ENCODE measurements at regions of chr7 and their contacts with region 1.

Region 1: DNA sequence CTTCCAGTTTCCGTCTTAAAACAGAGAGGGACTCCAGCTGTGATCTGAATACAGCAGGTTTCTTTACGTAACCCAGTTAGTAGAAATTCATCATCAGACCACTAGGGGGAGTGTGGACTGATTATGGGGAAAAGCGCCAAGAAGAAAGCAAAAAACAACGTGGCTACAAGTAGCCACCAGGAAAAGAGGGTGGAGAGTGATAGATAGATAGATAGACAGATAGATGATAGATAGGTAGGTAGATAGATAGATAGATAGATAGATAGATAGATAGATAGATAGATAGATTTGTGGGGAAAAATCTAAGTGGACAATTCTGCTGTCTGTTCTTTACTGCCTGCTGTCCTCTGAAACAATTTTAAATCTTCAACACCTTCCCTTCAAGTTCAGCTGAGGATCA is 12.7 kb upstream of the AKR1B10 start:
- DNase-seq: peak; percentile 85
- H3K4me3 ChIP-seq: no peak overlapping the region
- H3K27ac ChIP-seq: no peak overlapping the region
- H3K4me1 ChIP-seq: peaks cover 13% of the 10 kb centered on the region
- H3K27me3 ChIP-seq: no peaks in the 10 kb centered on the region
- CTCF ChIP-seq: peak; percentile 66 to 72
- POLR2A ChIP-seq: no peak

Region 2: DNA sequence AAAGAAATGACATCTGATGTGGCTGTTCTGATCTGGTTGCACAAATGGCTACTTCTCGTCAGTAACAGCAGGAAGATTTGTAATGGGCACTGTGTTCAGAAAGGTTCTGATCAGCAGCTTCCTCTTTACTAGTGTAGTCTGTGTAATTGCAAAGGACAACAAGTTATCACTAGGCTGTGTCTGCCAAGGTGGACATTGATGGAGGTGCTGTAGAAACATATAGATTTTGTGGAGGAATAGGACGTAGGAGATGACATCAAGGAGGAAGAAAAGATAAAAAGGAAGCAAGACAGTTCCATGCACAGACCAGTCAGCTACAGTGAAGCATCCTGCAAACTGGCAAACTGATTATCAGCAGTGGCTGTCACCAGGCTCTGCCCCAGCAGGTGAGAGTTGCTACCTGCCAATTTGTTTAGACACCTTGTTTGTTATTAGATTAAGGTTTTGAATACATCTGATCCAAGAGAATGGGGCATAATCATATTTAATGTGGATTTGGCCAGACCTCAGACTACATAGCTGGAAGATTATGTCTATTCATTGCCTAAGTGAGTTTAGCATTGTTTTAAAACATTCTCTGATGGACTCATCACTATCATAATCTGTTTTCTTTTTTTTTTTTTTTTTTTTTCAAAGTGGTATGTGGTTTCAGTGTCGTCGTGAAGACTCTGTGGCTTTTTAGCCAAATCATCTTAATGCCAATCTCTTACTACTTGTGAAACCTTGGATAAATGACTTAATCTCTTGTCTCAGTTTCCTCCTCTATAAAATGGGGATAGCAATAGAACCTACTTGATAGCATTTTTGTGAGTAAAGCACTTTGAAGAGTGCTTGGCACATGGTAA is 805.4 kb before region 1 on chr7:
- CTCF ChIA-PET with region 1: no interaction called
- POLR2A ChIA-PET with region 1: no interaction called
- dilution Hi-C with region 1: no loop called
- intact Hi-C with region 1: no loop called
- DNase-seq: no peak
- H3K4me3 ChIP-seq: no peak overlapping the region
- H3K27ac ChIP-seq: no peak overlapping the region
- H3K4me1 ChIP-seq: no peaks in the 10 kb centered on the region
- H3K27me3 ChIP-seq: no peaks in the 10 kb centered on the region
- CTCF ChIP-seq: no peak
- POLR2A ChIP-seq: no peak

Region 3: DNA sequence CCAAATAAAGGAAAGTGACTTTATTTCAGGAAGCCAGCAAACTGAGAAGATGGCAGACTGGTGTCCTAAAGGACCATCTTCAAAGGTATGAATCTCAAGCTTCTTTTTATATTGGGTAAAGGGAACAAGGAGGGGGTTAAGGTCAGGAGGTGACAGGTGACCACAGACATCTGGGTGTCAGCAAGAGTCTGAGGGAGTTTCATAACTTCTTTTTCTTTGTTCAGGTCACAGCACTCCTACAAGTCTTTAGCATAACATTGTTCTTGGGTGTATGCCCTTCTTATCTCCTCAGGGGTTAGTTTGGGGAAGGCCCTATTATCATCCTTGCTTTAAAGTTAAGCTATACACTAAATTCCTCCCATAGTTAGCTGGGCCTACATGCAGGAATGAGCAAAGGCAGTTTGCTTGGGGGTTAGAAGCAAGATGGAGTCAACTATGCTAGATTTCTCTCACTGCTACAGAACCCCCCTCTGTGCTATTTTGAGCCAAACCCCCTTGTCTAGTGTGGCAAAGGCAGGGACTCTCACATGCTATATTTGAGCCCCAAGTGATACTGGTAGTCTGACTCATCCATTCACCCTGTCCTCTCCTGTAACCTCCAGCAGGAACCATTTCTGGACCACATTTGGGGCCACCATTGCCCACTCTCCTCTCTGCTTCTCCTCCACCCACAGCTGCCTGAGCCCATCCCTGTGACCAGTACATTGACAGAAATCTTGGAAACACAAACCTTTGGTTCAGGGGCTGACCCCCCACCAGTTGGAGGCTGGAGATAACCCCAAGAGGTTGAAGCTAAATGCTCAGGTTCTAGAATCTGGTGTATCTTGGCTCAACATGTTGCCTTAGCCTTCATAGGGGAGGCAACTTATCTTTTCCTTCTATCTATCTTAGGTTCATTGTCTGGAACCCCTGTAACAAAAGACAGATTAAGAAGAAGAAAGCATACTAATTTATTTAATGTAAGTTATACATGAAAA is 443.0 kb before region 1 on chr7:
- CTCF ChIA-PET with region 1: no interaction called
- POLR2A ChIA-PET with region 1: no interaction called
- dilution Hi-C with region 1: no loop called
- intact Hi-C with region 1: no loop called
- DNase-seq: no peak
- H3K4me3 ChIP-seq: no peak overlapping the region
- H3K27ac ChIP-seq: no peak overlapping the region
- H3K4me1 ChIP-seq: no peaks in the 10 kb centered on the region
- H3K27me3 ChIP-seq: no peaks in the 10 kb centered on the region
- CTCF ChIP-seq: no peak
- POLR2A ChIP-seq: no peak

Region 4: GRCh38 chr7:134126966-134127848 is 387.5 kb before region 1 on chr7 and contains the start of gene LRGUK:
- CTCF ChIA-PET with region 1: no interaction called
- POLR2A ChIA-PET with region 1: no interaction called
- dilution Hi-C with region 1: no loop called
- intact Hi-C with region 1: no loop called
- DNase-seq: peak; percentile 73
- H3K4me3 ChIP-seq: peak within 1 kb of the TSS; percentile 20 to 62 (median 46)
- H3K27ac ChIP-seq: no peak within 1 kb of the TSS
- H3K4me1 ChIP-seq: no peaks in the 10 kb centered on the region
- H3K27me3 ChIP-seq: peaks cover 11 to 39% of the 10 kb centered on the region in 2 experiments
- CTCF ChIP-seq: no peak
- POLR2A ChIP-seq: no peak
- total RNA-seq, gene LRGUK: 0.11 TPM in 1 of 2 replicates, not detected in the other

Region 5: DNA sequence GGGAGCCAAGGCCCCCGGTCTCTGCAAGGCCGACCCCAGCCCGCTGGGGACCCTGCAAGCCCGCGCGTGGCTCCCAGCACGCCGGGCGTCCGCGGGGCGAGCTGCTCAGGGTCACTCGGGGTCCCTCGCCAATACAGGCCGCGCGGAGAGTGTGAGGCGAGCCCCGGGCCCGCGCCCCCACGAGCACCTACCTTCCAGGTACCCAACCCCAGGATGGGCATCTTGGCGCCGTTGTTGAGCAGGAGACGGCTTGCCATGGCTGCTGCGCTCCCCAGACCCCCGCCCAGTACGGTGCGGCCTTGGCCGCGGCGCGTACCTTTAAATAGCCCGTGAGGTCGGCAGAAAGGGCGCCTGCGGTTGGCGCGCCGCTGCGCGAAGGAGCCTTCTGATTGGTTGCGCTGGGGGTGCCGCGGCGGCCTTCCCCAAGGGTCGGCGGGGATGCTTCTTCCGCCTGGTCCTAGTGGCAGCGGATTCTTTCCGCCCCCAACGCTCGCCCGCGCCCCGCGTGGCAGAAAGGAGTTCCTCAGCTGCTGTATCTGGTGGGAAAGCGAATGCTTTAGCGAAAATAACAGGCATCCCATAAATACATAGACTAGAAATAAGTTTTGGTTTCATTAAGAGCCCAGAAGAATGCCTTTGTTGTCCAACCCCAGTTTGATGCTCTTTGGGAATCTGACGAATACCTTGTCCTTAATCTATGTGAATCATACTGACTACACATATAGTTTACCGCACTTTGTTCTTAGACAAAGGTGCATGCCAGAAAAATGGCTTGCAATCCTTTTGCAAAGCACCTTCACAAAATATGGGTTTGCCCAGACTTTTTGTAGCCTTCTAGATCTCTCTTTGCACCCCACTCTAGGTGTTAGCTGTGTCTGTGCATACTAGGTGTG is 55.6 kb before region 1 on chr7 and contains the start of gene AKR1B1:
- CTCF ChIA-PET with region 1: interaction called, 11 read pairs
- POLR2A ChIA-PET with region 1: no interaction called
- dilution Hi-C with region 1: no loop called
- intact Hi-C with region 1: loop called (anchors 1 kb)
- DNase-seq: peak; percentile 89
- H3K4me3 ChIP-seq: peak within 1 kb of the TSS; percentile 42 to 81 (median 57)
- H3K27ac ChIP-seq: peak within 1 kb of the TSS; percentile 5
- H3K4me1 ChIP-seq: peaks cover 20% of the 10 kb centered on the region
- H3K27me3 ChIP-seq: no peaks in the 10 kb centered on the region
- CTCF ChIP-seq: peak; percentile 71 to 72
- POLR2A ChIP-seq: no peak
- total RNA-seq, gene AKR1B1: 159 and 160 TPM in 2 replicates

Region 6: DNA sequence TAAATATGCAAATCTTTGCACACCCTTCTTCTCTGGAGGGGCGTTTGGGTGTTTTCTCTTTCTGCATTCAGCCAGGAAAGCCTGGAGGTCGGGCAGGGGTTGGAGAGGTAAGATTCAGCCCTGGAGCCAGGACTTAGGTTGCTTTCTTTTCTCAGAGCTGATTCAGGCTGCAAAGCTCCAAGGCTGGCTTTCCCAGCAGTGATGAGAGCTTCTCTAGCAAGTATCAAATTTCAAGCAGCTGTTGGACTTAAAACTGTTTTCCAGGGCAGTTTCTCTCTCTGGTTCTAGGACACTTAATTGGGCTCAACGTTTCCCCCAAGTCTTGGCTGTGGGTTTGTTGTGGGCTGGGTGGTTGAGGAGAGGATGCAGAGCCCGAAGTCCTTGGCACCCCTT is 13.3 kb after region 1 on chr7:
- CTCF ChIA-PET with region 1: interaction called, 11 read pairs
- POLR2A ChIA-PET with region 1: no interaction called
- dilution Hi-C with region 1: no loop called
- intact Hi-C with region 1: no loop called
- DNase-seq: no peak
- H3K4me3 ChIP-seq: no peak overlapping the region
- H3K27ac ChIP-seq: no peak overlapping the region
- H3K4me1 ChIP-seq: no peaks in the 10 kb centered on the region
- H3K27me3 ChIP-seq: peaks cover 4 to 16% of the 10 kb centered on the region in 2 experiments
- CTCF ChIP-seq: no peak
- POLR2A ChIP-seq: no peak

Region 7: GRCh38 chr7:134553976-134554375 is 39.3 kb after region 1 on chr7:
- CTCF ChIA-PET with region 1: interaction called, 33 read pairs
- POLR2A ChIA-PET with region 1: no interaction called
- dilution Hi-C with region 1: no loop called
- intact Hi-C with region 1: no loop called
- DNase-seq: no peak
- H3K4me3 ChIP-seq: no peak overlapping the region
- H3K27ac ChIP-seq: no peak overlapping the region
- H3K4me1 ChIP-seq: no peaks in the 10 kb centered on the region
- H3K27me3 ChIP-seq: peaks cover 0 to 11% of the 10 kb centered on the region in 2 experiments
- CTCF ChIP-seq: peak in 1 of 2 donors; percentile 10
- POLR2A ChIP-seq: no peak

Region 8: DNA sequence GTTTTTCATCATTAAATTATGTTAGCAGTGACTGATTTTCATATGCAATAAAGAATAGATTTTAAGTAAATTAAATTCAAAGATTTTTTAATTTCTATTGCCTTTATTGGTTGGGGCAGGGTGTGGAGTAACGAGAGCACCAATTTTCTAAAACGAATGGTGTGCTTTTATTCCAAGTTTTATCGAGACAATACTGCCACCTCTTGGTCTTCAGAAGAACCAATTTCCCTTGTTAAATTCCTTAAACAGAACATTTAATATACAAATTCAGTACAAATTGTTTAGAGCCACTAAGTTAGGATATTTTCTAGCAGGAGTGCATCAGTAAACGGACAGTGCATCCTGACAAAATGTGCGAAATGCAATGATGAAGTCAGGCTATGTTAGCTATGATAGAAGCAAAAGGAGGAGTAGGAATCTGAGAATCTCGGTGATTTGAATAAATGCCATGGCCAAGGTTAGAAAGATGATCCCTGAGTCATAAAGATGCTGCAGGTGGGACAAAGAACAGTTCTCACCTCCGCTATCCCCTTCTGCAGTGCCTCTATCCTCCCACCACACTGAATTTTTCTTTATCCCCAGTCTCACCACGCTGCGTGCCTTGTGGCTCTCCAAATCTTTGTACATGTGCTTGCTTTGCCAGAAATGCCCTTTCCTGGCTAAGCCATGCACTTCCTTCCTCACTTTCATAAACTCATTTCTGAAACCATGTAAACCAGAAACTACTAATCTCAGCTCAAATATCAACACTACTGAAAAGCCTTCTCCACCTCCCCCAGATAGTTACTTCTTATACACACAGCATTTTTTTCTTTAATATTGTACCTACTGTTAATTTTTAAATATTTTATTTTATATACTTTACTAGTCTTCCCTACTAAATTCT is 439.8 kb after region 1 on chr7:
- CTCF ChIA-PET with region 1: no interaction called
- POLR2A ChIA-PET with region 1: no interaction called
- dilution Hi-C with region 1: no loop called
- intact Hi-C with region 1: loop called (anchors 10 kb)
- DNase-seq: peak; percentile 38
- H3K4me3 ChIP-seq: no peak overlapping the region
- H3K27ac ChIP-seq: no peak overlapping the region
- H3K4me1 ChIP-seq: no peaks in the 10 kb centered on the region
- H3K27me3 ChIP-seq: no peaks in the 10 kb centered on the region
- CTCF ChIP-seq: peak; percentile 20 to 37
- POLR2A ChIP-seq: no peak

Region 9: GRCh38 chr7:135012229-135012628 is 497.6 kb after region 1 on chr7:
- CTCF ChIA-PET with region 1: no interaction called
- POLR2A ChIA-PET with region 1: no interaction called
- dilution Hi-C with region 1: no loop called
- intact Hi-C with region 1: no loop called
- DNase-seq: no peak
- H3K4me3 ChIP-seq: no peak overlapping the region
- H3K27ac ChIP-seq: no peak overlapping the region
- H3K4me1 ChIP-seq: no peaks in the 10 kb centered on the region
- H3K27me3 ChIP-seq: no peaks in the 10 kb centered on the region
- CTCF ChIP-seq: no peak
- POLR2A ChIP-seq: no peak

Measured in endothelial cell of umbilical vein (primary cell).